K562 (cell line): ENCODE measurements at regions of chr12 and their contacts with region 1.

Region 1: DNA sequence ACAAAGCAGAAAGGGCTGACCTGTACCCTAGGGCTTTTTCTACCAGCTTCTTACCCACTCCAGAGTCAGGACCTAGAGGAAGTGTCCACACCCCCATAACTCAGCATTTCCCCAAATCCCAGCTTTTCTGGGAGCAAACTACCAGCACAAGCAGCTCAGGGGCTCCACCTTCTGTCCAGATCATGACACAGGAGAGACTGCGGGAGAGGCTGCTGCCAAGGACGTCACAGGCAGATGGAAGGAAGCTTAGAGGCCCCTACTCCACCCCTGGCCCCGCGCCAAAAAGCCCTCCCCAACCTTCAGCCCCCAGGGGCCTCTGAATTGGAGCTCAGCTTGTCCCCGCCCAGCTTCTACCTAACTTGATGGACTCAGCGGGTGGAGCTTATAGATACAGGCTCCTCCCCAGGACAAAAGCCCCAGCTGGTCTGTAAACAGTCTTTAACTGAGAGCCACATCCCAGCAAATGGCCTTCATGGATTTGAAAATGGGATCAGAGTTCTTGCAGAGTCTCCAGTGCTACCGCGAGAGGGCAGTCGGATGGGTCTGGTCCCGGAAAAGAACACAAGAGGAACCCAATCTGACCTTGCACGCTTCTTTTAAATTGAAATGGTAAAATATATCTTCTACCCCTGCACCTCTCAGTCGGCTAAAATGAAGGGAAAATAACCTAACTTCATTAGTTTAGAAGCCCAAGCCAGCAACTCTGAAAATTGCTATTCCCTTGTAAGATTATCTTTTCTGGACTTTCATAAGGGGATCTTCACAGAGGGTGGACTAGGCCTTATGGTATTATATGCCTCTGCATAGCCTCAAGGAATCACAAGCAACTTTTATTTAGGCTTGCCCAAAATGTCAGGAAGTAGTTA is 6.8 kb upstream of the BAZ2A start:
- DNase-seq: peak; percentile 90 to 100 (median 94)
- ATAC-seq: peak; percentile 84
- H3K4me3 ChIP-seq: peak overlapping the region; percentile 85
- H3K27ac ChIP-seq: peak overlapping the region; percentile 86
- H3K4me1 ChIP-seq: peaks cover 23 to 38% of the 10 kb centered on the region in 2 experiments
- H3K27me3 ChIP-seq: no peaks in the 10 kb centered on the region
- CTCF ChIP-seq: peak; percentile 79 to 91 (median 88)
- EP300 ChIP-seq: peak; percentile 62
- POLR2A ChIP-seq: peak; percentile 76
- RAD21 ChIP-seq: peak; percentile 66 to 87

Region 2: GRCh38 chr12:56359851-56360767 is 276.8 kb before region 1 on chr12 and contains the start of gene STAT2:
- CTCF ChIA-PET with region 1: no interaction called
- POLR2A ChIA-PET with region 1: interaction called, 3 read pairs
- in situ Hi-C with region 1: no loop called
- intact Hi-C with region 1: loop called (anchors 10 kb)
- DNase-seq: peak; percentile 94 to 100 (median 96)
- ATAC-seq: peak; percentile 98
- H3K4me3 ChIP-seq: peak within 1 kb of the TSS; percentile 64
- H3K27ac ChIP-seq: peak within 1 kb of the TSS; percentile 76
- H3K4me1 ChIP-seq: peaks cover 13 to 15% of the 10 kb centered on the region in 2 experiments
- H3K27me3 ChIP-seq: no peaks in the 10 kb centered on the region
- CTCF ChIP-seq: peak in 1 of 3 experiments; percentile 19; a peak in 1 of 6 replicates
- EP300 ChIP-seq: peak; percentile 50
- POLR2A ChIP-seq: peak; percentile 82
- RAD21 ChIP-seq: peak in 1 of 2 experiments; percentile 19; a peak in 1 of 4 replicates
- polyA plus RNA-seq, gene STAT2: 15.5 to 16.9 TPM

Region 3: DNA sequence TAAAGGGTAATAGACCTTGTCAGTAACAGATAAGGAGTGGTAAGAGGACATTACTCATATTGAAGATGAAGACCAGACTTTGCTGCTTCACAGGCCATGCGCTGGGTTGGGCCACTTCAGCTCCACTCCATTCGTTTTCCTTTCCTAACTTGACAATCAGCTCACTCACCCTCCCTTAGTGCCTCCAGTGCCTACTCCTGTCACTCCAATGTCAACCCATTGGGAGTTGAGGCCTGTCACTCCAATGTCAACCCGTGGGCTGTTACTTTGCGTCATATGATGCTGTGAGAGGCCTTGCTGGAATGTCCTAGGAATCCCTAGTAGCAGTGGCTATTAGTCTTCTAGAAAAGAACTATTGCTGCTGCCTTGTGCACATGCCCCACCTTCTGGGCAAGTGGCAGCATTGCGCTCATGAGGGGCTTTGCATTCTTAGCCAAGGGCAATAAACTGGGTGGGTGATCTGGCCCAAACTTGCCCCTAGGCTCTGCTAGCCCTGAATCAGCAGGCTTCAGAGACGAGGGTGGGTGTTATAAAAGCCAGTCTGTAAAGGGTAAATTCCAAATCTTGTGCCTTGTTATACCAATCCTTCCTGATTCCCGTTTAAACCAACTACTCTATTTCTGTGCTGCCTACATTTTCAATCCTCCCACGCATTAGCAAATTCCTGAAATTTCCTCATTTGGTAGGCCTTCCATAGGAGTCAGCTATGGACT is 42.8 kb before region 1 on chr12:
- CTCF ChIA-PET with region 1: no interaction called
- POLR2A ChIA-PET with region 1: interaction called, 4 read pairs
- in situ Hi-C with region 1: no loop called
- intact Hi-C with region 1: loop called (anchors 1 kb)
- DNase-seq: peak; percentile 58 to 72 (median 67)
- ATAC-seq: peak; percentile 83
- H3K4me3 ChIP-seq: no peak overlapping the region
- H3K27ac ChIP-seq: no peak overlapping the region
- H3K4me1 ChIP-seq: peaks cover 0 to 2% of the 10 kb centered on the region in 2 experiments; a peak in 1 of 5 replicates
- H3K27me3 ChIP-seq: no peaks in the 10 kb centered on the region
- CTCF ChIP-seq: peak; percentile 86 to 90 (median 87)
- EP300 ChIP-seq: no peak
- POLR2A ChIP-seq: no peak
- RAD21 ChIP-seq: peak; percentile 60 to 79

Region 4: DNA sequence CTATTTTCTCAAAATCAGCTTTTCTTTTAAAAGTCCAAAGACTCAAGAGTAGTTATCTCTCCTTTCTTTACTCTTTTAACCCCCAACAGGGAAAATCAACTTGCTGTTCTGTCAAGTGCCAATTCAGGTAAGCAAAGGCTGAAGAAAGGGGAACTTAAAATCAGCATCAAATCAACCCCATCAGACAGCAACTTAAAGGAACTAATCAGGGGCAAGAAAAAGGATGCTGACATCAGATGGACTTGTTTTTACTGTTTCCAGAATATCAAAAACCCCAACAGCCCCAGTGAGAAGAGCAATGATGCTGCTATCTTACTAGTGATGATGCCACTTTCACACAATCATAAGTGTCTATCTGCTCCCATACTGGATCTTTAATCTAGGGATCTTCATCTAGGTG is 10.2 kb before region 1 on chr12:
- CTCF ChIA-PET with region 1: no interaction called
- POLR2A ChIA-PET with region 1: interaction called, 22 read pairs
- in situ Hi-C with region 1: no loop called
- intact Hi-C with region 1: no loop called
- DNase-seq: no peak
- ATAC-seq: no peak
- H3K4me3 ChIP-seq: no peak overlapping the region
- H3K27ac ChIP-seq: no peak overlapping the region
- H3K4me1 ChIP-seq: peaks cover 10 to 30% of the 10 kb centered on the region in 2 experiments
- H3K27me3 ChIP-seq: no peaks in the 10 kb centered on the region
- CTCF ChIP-seq: no peak
- EP300 ChIP-seq: no peak
- POLR2A ChIP-seq: no peak
- RAD21 ChIP-seq: no peak

Region 5: DNA sequence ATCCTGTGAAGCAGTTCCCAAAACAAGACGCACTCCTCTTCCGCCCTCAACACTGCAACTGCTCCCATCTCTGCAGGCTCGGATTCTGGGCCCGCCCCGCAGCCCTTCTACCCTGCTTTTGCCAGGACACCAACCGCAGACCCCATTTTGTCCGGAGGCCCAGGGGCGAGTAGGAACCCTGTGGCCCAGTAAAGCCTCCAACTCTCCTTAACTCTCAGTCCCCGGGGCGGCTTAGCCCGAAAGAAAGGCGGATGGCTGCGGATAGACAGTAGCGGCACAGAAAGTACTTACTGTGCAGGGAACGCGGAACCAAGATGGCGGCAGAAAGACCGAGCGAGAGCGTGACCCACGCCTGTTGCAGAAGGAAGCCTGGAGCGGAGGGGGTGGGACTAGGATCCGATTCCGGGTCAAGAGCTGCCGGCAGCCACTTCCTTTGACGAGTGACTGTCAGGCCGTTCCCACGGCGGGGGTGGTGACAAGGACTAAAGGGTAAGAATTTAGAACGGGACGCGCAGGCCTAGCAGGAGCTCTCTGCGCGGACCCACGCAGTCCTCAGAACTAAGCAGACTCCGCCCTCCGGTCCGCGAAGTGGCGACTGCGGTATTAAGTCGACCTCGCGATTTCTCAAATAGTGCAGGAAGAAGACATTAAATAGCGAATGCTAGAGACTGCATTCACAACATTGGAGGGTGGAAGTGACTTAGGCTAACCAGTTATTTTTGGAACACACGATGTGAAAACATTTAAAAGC is 88.2 kb after region 1 on chr12 and contains the start of gene NACA:
- CTCF ChIA-PET with region 1: no interaction called
- POLR2A ChIA-PET with region 1: interaction called, 14 read pairs
- in situ Hi-C with region 1: loop called (anchors 10 kb)
- intact Hi-C with region 1: loop called (anchors 2 kb)
- DNase-seq: peak; percentile 95 to 99 (median 96)
- ATAC-seq: peak; percentile 93
- H3K4me3 ChIP-seq: peak within 1 kb of the TSS; percentile 89
- H3K27ac ChIP-seq: peak within 1 kb of the TSS; percentile 97
- H3K4me1 ChIP-seq: peaks cover 14 to 29% of the 10 kb centered on the region in 2 experiments
- H3K27me3 ChIP-seq: no peaks in the 10 kb centered on the region
- CTCF ChIP-seq: no peak
- EP300 ChIP-seq: peak; percentile 3; the same call in 1 of the 2 replicates
- POLR2A ChIP-seq: peak; percentile 99
- RAD21 ChIP-seq: peak in 1 of 2 experiments; percentile 21; a peak in 2 of 4 replicates
- polyA plus RNA-seq, gene NACA: 2,280 to 2,416 TPM

Region 6: DNA sequence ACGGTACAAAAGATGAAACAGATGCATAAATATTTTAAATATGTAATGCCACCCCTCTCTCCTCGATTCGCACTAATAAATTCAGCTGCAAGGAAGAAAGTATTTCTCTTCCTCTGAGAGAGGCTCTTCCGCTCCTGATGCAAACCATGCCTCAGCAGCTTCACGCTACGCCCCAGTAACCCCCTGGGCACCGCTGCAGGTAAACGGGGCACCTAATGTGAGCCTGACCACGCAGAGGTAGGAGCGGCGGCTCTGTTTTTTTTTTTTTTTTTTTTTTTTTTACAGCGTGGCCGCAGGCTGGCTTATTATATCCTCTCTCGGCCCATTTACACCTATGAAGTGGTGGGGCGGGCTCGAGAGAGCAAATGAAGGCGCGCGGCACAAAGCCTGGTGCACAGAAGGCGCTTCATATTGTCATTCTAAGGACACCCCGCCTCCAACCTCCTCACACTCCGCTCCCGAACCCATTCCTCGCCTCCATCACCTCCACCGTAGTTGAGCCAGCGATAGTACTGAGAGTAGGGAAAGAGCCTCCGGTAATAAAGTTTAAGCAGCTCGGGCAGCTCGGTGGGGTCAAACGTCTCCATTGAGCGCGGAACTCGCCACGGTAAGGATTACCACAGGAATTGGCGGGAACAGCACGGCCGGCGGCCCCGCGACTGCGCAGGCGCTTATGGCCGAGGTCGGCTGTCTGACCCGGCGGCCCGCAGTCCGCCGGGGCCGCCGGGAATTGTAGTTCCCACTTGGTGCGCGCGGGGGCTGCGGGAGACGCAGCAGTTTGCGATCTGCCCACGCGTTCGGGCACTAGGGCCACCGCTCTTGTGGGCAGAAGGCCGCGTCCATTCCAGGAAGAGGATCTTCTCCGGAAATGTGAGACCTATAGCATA is 115.0 kb after region 1 on chr12 and contains the start of gene PRIM1:
- CTCF ChIA-PET with region 1: no interaction called
- POLR2A ChIA-PET with region 1: interaction called, 3 read pairs
- in situ Hi-C with region 1: no loop called
- intact Hi-C with region 1: loop called (anchors 5 kb)
- DNase-seq: peak; percentile 90 to 96 (median 93)
- ATAC-seq: peak; percentile 90
- H3K4me3 ChIP-seq: peak within 1 kb of the TSS; percentile 72
- H3K27ac ChIP-seq: peak within 1 kb of the TSS; percentile 97
- H3K4me1 ChIP-seq: peaks cover 11 to 16% of the 10 kb centered on the region in 2 experiments; a peak in 4 of 5 replicates
- H3K27me3 ChIP-seq: no peaks in the 10 kb centered on the region
- CTCF ChIP-seq: no peak
- EP300 ChIP-seq: no peak
- POLR2A ChIP-seq: peak; percentile 94
- RAD21 ChIP-seq: no peak
- polyA plus RNA-seq, gene PRIM1: 175 to 179 TPM

Region 7: GRCh38 chr12:57016318-57016717 is 379.4 kb after region 1 on chr12 and contains the start of gene TAC3:
- CTCF ChIA-PET with region 1: no interaction called
- POLR2A ChIA-PET with region 1: no interaction called
- in situ Hi-C with region 1: no loop called
- intact Hi-C with region 1: no loop called
- DNase-seq: peak; percentile 60 to 79 (median 70)
- ATAC-seq: peak; percentile 92
- H3K4me3 ChIP-seq: no peak within 1 kb of the TSS
- H3K27ac ChIP-seq: no peak within 1 kb of the TSS
- H3K4me1 ChIP-seq: peaks cover 6 to 9% of the 10 kb centered on the region in 2 experiments; a peak in 4 of 5 replicates
- H3K27me3 ChIP-seq: peaks cover 2 to 20% of the 10 kb centered on the region in 2 experiments
- CTCF ChIP-seq: no peak
- EP300 ChIP-seq: no peak
- POLR2A ChIP-seq: no peak
- RAD21 ChIP-seq: no peak
- polyA plus RNA-seq, gene TAC3: 2.4 to 2.6 TPM

Region 8: DNA sequence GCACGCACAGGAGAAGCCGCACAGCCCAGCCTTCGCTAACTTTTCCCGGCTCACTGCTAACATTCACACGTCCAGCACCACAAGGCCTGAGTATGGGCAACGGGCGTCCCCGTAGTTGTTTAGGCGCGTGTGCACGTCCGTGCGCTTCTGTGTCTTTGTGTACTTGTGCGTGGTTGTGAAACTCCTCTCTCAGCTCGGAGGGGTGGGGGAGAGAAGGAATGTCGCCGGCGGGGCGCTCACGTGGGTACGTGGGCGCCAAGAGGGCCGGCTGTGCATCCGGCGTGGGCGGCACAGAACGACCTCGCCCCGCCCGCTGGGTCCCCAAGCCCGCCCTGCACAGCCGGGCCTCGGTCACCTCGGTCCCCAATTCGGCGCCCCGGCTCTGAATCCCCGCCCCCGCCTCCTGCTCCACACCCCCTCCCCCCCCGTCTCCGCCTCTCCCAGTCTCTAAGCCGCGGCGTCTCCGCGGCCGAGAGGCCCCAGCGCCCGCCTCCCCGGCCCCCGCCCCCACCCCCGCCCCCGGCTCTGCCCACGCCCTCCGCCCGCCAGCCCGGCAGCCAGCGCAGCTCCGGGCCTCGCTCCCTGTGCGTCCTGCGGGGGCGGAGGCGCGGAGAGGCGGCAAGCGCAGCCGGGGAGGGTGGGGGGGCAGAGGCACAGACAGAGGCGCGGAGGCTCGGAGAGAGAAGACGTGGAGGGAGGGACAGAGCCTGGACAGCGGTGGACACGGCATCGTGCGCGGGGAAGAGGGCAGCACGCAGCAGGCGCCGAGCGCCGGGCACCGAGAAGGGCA is 451.7 kb after region 1 on chr12 and contains the start of gene NAB2:
- CTCF ChIA-PET with region 1: no interaction called
- POLR2A ChIA-PET with region 1: no interaction called
- in situ Hi-C with region 1: no loop called
- intact Hi-C with region 1: loop called (anchors 10 kb)
- DNase-seq: peak; percentile 85 to 97 (median 90)
- ATAC-seq: peak; percentile 69
- H3K4me3 ChIP-seq: peak within 1 kb of the TSS; percentile 75
- H3K27ac ChIP-seq: peak within 1 kb of the TSS; percentile 93
- H3K4me1 ChIP-seq: peaks cover 33 to 66% of the 10 kb centered on the region in 2 experiments
- H3K27me3 ChIP-seq: no peaks in the 10 kb centered on the region
- CTCF ChIP-seq: no peak
- EP300 ChIP-seq: peak; percentile 47; the same call in 1 of the 2 replicates
- POLR2A ChIP-seq: peak; percentile 78
- RAD21 ChIP-seq: no peak
- polyA plus RNA-seq, gene NAB2: 0.45 to 0.52 TPM